ACHN (cell line): ENCODE measurements at regions of chr6 and their contacts with region 1.

Region 1: DNA sequence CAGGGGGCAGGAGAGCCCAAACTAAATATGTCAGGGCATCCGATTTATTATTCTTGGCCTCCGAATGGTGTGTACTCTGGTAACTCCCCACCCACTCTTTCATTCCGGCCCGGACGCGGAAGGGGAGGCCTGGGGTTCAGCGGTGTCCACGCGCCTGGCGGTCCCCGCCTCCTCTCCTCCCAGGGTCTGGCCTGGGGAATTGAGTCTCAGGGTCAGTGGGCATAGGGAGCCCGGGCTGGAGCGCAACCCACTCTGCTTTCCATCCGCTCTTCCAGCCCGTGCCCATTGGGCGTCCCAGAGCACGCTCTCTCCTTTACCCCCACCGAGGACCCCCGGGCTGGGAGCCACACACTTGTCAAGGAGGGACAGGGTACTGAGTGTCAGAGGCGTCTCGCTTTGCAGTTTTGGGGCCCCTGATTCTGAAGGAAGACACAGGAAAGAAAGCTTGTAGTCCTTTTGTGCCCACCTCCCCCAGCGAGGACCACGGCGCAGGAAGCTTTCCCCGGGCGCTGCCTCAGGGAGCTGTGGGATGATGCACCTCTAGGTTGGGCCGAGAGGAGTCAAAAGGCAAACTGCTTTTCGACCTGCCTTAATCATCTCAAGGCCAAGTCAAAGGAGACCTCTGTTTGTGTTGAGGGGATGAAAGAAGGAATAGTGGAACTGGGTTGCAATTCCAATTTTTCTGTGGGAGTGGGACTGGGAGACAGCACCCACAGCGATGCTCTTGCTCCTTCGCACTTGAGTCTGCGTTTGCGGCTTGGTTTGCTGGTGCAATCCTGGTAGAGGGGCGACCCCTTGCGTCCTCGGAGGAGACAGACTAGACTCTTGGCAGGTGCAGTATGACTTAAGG is 2.5 kb downstream of the RSPO3 start:
- DNase-seq: peak; percentile 75

Region 2: GRCh38 chr6:126359936-126360537 is 761.0 kb before region 1 on chr6:
- in situ Hi-C with region 1: no loop called
- DNase-seq: no peak

Region 3: GRCh38 chr6:126804332-126805064 is 316.5 kb before region 1 on chr6:
- in situ Hi-C with region 1: loop called (anchors 25 kb)
- DNase-seq: peak; percentile 59

Region 4: DNA sequence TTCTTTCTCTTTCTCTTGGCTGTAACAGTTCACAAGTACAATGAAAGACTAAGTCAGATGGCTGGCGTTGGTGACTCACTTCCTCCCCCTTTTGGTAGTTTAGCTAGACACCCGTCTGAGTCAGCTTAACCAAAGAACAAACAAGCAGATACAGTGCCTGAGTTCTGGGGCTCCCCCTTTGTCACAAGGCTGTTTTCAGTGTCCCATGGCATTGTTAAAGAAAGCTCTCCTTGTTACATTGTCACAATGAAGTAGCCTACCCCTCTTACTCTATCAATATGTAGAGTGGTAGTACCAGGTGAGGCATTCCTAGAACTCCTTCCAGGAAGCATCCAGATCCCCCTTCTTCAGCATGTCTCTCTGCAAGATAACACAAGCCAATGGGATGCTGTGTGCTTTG is 299.5 kb after region 1 on chr6:
- in situ Hi-C with region 1: no loop called
- DNase-seq: peak; percentile 88